ENCODE measurements at regions of chr9 and their contacts with region 1.

Region 1: GRCh38 chr9:18215626-18216025 is 258.3 kb upstream of the ADAMTSL1 start:
- DNase-seq: no peak
- H3K4me3 ChIP-seq: no peak overlapping the region
- H3K27ac ChIP-seq: no peak overlapping the region
- H3K4me1 ChIP-seq: no peaks in the 10 kb centered on the region
- H3K27me3 ChIP-seq: no peaks in the 10 kb centered on the region
- CTCF ChIP-seq: no peak
- POLR2A ChIP-seq: no peak

Region 2: GRCh38 chr9:17531642-17532254 is 683.9 kb before region 1 on chr9:
- intact Hi-C with region 1: loop called (anchors 10 kb)
- DNase-seq: no peak
- H3K4me3 ChIP-seq: no peak overlapping the region
- H3K27ac ChIP-seq: no peak overlapping the region
- H3K4me1 ChIP-seq: no peaks in the 10 kb centered on the region
- H3K27me3 ChIP-seq: no peaks in the 10 kb centered on the region
- CTCF ChIP-seq: peak; percentile 18 to 60 (median 40)
- POLR2A ChIP-seq: no peak

Measured in esophagus squamous epithelium (tissue), 5 donors.